ENCODE measurements at regions of chr16 and their contacts with region 1.

Region 1: DNA sequence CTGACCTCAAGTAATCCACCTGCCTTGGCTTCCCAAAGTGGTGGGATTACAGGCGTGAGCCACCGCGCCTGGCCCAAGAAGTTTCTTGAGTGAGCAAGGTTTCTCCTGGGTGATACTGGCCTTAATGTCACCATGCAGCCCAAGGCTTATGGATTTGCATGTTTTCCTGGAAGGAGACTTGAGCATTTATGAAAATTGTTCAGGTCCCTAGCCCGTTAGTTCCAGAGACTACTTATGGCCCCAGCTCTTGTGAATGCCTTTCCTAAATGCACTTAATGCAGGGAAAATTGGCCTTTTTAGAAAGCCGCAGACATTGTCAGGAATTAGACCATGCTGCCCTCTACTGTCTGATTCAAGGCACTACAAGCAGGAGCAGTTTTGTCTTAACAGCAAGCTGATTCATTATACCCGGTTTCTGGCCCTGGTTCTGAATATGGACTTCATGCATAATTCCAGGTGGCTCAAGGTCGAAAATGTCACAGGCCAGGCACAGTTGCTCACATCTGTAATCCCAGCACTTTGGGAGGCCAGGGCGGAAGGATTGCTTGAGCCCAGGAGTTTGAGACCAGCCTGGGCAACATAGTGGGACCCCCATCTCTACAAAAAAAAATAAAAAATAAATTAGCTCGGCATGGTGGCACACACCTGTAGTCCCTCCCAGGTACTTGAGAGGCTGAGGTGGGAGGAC is 91.3 kb downstream of the SNX29 start:
- DNase-seq: peak; percentile 81
- H3K4me3 ChIP-seq: no peak overlapping the region
- H3K27ac ChIP-seq: no peak overlapping the region
- H3K4me1 ChIP-seq: peaks cover 2% of the 10 kb centered on the region
- H3K27me3 ChIP-seq: no peaks in the 10 kb centered on the region
- CTCF ChIP-seq: peak; percentile 90

Region 2: GRCh38 chr16:11407047-11407982 is 660.5 kb before region 1 on chr16:
- CTCF ChIA-PET with region 1: interaction called, 7 read pairs
- POLR2A ChIA-PET with region 1: no interaction called
- intact Hi-C with region 1: loop called (anchors 2 kb)
- DNase-seq: peak; percentile 82
- H3K4me3 ChIP-seq: no peak overlapping the region
- H3K27ac ChIP-seq: no peak overlapping the region
- H3K4me1 ChIP-seq: peaks cover 19% of the 10 kb centered on the region
- H3K27me3 ChIP-seq: no peaks in the 10 kb centered on the region
- CTCF ChIP-seq: peak; percentile 84

Region 3: GRCh38 chr16:11797166-11797956 is 270.5 kb before region 1 on chr16 and contains the start of gene ZC3H7A:
- CTCF ChIA-PET with region 1: no interaction called
- POLR2A ChIA-PET with region 1: no interaction called
- intact Hi-C with region 1: loop called (anchors 10 kb)
- DNase-seq: peak; percentile 98
- H3K4me3 ChIP-seq: peak within 1 kb of the TSS; percentile 83
- H3K27ac ChIP-seq: peak within 1 kb of the TSS; percentile 85
- H3K4me1 ChIP-seq: peaks cover 19% of the 10 kb centered on the region
- H3K27me3 ChIP-seq: no peaks in the 10 kb centered on the region
- CTCF ChIP-seq: peak; percentile 55
- total RNA-seq, gene ZC3H7A: 65.0 and 67.2 TPM in 2 replicates

Region 4: GRCh38 chr16:11949527-11949926 is 118.3 kb before region 1 on chr16:
- CTCF ChIA-PET with region 1: interaction called, 19 read pairs
- POLR2A ChIA-PET with region 1: no interaction called
- intact Hi-C with region 1: loop called (anchors 1 kb)
- DNase-seq: peak; percentile 68
- H3K4me3 ChIP-seq: no peak overlapping the region
- H3K27ac ChIP-seq: no peak overlapping the region
- H3K4me1 ChIP-seq: no peaks in the 10 kb centered on the region
- H3K27me3 ChIP-seq: no peaks in the 10 kb centered on the region
- CTCF ChIP-seq: peak; percentile 50

Region 5: GRCh38 chr16:12207939-12208685 is 140.3 kb after region 1 on chr16:
- CTCF ChIA-PET with region 1: no interaction called
- POLR2A ChIA-PET with region 1: no interaction called
- intact Hi-C with region 1: no loop called
- DNase-seq: no peak
- H3K4me3 ChIP-seq: no peak overlapping the region
- H3K27ac ChIP-seq: no peak overlapping the region
- H3K4me1 ChIP-seq: no peaks in the 10 kb centered on the region
- H3K27me3 ChIP-seq: no peaks in the 10 kb centered on the region
- CTCF ChIP-seq: no peak

Region 6: GRCh38 chr16:12419151-12419550 is 351.3 kb after region 1 on chr16:
- CTCF ChIA-PET with region 1: interaction called, 13 read pairs
- POLR2A ChIA-PET with region 1: no interaction called
- intact Hi-C with region 1: no loop called
- DNase-seq: no peak
- H3K4me3 ChIP-seq: no peak overlapping the region
- H3K27ac ChIP-seq: no peak overlapping the region
- H3K4me1 ChIP-seq: peaks cover 8% of the 10 kb centered on the region
- H3K27me3 ChIP-seq: no peaks in the 10 kb centered on the region
- CTCF ChIP-seq: no peak

Measured in A673 (cell line).